ENCODE measurements at regions of chr21 and their contacts with region 1.

Region 1: GRCh38 chr21:39183237-39184007 is at the start of gene PSMG1:
- DNase-seq: peak; percentile 89
- CTCF ChIP-seq: no peak

Region 2: DNA sequence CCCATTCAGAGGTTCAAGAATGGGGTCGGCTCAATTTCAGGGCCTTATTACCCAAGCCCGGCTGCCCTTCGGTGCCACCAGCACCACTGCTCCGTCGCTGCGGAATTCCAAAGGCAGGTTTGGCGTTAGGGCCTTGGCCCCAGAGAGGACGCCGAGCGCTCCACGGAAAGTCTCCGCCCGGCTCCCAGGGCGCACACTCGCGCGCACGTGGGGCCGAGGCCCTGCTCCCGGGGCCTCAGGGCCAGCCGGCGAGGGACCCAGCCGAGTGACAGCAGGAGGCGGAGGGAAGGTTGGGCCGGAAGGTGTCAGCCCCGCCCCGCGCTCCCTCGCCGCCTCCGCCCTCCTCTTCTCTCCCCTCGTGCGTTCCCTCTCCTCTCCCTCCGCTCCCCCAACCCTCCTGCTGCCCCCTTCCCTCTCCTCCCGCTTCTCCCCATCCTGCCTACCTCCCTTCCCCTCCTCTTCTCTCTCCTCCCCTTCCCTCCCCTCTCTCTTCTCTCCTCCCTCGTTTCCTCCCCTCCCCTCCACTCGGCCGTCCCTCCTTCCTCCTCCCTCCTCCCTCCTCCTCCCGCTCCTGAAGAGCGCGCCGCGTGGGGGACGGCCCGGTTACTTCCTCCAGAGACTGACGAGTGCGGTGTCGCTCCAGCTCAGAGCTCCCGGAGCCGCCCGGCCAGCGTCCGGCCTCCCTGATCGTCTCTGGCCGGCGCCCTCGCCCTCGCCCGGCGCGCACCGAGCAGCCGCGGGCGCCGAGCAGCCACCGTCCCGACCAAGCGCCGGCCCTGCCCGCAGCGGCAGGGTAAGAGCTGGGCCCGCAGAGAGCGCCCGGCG is 377.9 kb before region 1 on chr21 and contains the start of gene ETS2:
- in situ Hi-C with region 1: no loop called
- DNase-seq: peak; percentile 89
- CTCF ChIP-seq: no peak

Region 3: GRCh38 chr21:39388038-39388810 is 204.8 kb after region 1 on chr21:
- in situ Hi-C with region 1: loop called (anchors 25 kb)
- DNase-seq: peak; percentile 89
- CTCF ChIP-seq: peak; percentile 97

Measured in GM13977 (cell line).